Breast epithelium (tissue), 4 donors: ENCODE measurements at regions of chr1 and their contacts with region 1.

Region 1: DNA sequence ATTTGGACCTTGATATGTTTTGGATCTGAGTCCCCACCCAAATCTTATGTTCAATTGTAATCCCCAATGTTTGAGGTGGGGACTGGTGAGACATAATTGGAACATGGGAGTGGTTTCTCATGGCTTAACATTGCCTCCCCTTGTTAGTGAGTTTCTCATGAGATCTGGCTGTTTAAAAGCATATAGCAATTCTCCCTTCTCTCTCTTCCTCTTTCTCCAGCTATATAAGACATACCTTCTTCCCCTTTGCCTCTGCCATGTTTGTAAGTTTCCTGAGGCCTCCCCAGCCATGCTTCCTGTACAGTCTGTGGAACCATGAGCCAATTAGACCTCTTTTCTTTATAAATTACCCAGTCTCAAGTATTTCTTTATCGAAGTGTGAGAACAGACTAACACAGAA is 692.4 kb downstream of the KCNT2 start:
- DNase-seq: no peak
- H3K4me3 ChIP-seq: no peak overlapping the region
- H3K27ac ChIP-seq: no peak overlapping the region
- H3K4me1 ChIP-seq: no peaks in the 10 kb centered on the region
- H3K27me3 ChIP-seq: no peaks in the 10 kb centered on the region
- CTCF ChIP-seq: no peak
- POLR2A ChIP-seq: no peak

Region 2: GRCh38 chr1:195218428-195219212 is 697.2 kb before region 1 on chr1:
- intact Hi-C with region 1: loop called (anchors 10 kb)
- DNase-seq: no peak
- H3K4me3 ChIP-seq: no peak overlapping the region
- H3K27ac ChIP-seq: no peak overlapping the region
- H3K4me1 ChIP-seq: no peaks in the 10 kb centered on the region
- H3K27me3 ChIP-seq: no peaks in the 10 kb centered on the region
- CTCF ChIP-seq: no peak
- POLR2A ChIP-seq: no peak